BJ (cell line): ENCODE measurements at regions of chr5 and their contacts with region 1.

Region 1: GRCh38 chr5:124883681-124884080 is 137.2 kb upstream of the ZNF608 start:
- DNase-seq: no peak
- H3K4me3 ChIP-seq: no peak overlapping the region
- H3K27me3 ChIP-seq: no peaks in the 10 kb centered on the region
- CTCF ChIP-seq: no peak

Region 2: GRCh38 chr5:124895236-124895635 is 11.6 kb after region 1 on chr5:
- CTCF ChIA-PET with region 1: interaction called, 10 read pairs
- POLR2A ChIA-PET with region 1: no interaction called
- DNase-seq: no peak
- H3K4me3 ChIP-seq: no peak overlapping the region
- H3K27me3 ChIP-seq: no peaks in the 10 kb centered on the region
- CTCF ChIP-seq: no peak